Activated CD8-positive, alpha-beta T cell treated with anti-CD3 and anti-CD28 coated beads for 36 hours (primary cell): ENCODE measurements at regions of chrX and their contacts with region 1.

Region 1: DNA sequence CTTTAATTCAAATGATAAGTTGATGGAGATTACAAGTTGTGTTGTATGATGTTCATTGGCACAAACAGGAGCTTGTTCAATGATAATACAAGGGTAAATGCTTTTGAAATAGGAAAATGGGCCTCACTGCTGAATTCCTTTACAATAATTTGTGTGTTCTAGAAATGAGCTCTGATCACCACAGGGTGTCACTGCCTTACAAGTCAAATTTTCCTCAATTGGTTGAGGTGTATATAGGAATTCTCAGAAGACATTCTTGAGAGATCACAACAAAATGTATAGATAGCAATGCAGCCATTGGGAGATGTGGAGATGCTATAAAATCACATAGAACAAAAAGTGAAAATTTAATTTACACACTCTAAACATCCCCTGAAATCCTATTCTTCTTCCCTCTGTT is 49.6 kb downstream of the KLF8 start:
- DNase-seq: peak; percentile 17
- ATAC-seq: no peak
- H3K4me3 Mint-ChIP-seq: no peak overlapping the region
- H3K27ac Mint-ChIP-seq: no peak overlapping the region
- H3K4me1 Mint-ChIP-seq: peaks cover 4% of the 10 kb centered on the region
- H3K27me3 Mint-ChIP-seq: no peaks in the 10 kb centered on the region
- CTCF ChIP-seq: peak; percentile 39

Region 2: DNA sequence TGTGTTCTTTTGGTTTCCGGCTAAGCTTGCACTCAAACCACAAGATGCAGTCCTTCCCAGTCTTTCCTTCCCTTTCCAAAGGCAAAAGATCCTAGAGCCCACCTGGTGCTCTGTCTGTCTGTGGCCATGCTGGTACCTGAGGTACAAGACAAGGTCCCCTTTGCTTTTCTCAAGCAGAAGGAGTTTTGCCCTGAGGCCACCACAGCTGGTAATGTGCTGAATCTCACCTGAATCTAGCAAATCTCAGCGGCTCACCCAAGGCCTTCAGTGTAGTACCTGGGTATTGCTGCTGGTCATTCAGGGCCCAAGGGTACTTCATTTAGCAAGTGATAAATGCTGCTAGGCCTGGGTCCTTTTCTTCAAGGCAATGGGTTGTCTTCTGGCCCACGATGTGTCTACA is 70.1 kb before region 1 on chrX:
- CTCF ChIA-PET with region 1: no interaction called
- POLR2A ChIA-PET with region 1: no interaction called
- intact Hi-C with region 1: no loop called
- DNase-seq: no peak
- ATAC-seq: no peak
- H3K4me3 Mint-ChIP-seq: no peak overlapping the region
- H3K27ac Mint-ChIP-seq: no peak overlapping the region
- H3K4me1 Mint-ChIP-seq: no peaks in the 10 kb centered on the region
- H3K27me3 Mint-ChIP-seq: no peaks in the 10 kb centered on the region
- CTCF ChIP-seq: no peak

Region 3: DNA sequence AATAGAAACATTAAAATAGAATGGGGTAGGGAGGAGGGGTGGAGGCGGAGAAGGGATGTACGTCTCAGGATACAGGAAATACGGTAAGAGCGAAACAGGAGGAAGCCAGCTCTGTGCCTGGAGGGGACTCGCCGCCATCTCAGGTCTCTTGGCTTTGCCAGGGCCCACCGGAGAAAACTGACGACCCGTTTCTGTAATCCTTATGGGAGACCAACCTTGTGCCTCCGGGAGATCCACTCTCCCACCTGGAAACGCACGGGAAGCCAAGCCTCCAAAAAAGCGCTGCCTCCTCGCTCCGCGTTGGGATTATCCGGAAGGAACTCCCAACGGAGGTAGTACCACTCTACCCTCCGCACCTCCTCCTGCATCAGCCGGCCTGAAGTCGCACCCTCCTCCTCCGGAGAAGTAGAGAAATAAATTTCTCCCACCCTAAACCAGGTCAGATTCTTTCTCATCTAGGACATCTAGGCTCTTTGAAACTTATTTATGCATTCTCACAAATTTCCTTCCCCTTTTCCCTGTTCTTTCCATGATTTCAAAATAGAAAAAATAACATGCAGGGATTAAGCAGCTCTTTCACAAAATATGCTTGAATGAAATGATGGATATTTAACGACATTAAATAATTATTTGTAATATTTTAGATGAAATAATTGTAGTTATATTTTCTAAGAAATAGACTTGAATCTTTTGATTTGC is 447.5 kb after region 1 on chrX and contains the start of gene NBDY:
- CTCF ChIA-PET with region 1: interaction called, 66 read pairs
- POLR2A ChIA-PET with region 1: interaction called, 3 read pairs
- intact Hi-C with region 1: loop called (anchors 5 kb)
- DNase-seq: peak; percentile 39
- ATAC-seq: peak; percentile 75
- H3K4me3 Mint-ChIP-seq: peak within 1 kb of the TSS; percentile 87
- H3K27ac Mint-ChIP-seq: peak within 1 kb of the TSS; percentile 92
- H3K4me1 Mint-ChIP-seq: peaks cover 28% of the 10 kb centered on the region
- H3K27me3 Mint-ChIP-seq: no peaks in the 10 kb centered on the region
- CTCF ChIP-seq: no peak
- total RNA-seq, gene NBDY: 31.6 to 36.8 TPM